Heart right ventricle (tissue), 16 donors: ENCODE measurements at regions of chr19 and their contacts with region 1.

Region 1: GRCh38 chr19:42529248-42529764 is 1.0 kb upstream of the CEACAM1 start:
- DNase-seq: peak; percentile 46 to 59
- ATAC-seq: peak; percentile 73 to 95 (median 84)
- H3K4me3 ChIP-seq: peak overlapping the region in 6 of 10 donors; percentile 27 to 50 (median 45)
- H3K27ac ChIP-seq: peak overlapping the region in 9 of 10 donors; percentile 33 to 89 (median 71)
- H3K4me1 ChIP-seq: peaks cover 2 to 35% (median 14%) of the 10 kb centered on the region in 9 donors
- H3K27me3 ChIP-seq: no peaks in the 10 kb centered on the region
- CTCF ChIP-seq: peak; percentile 74 to 92 (median 82)

Region 2: DNA sequence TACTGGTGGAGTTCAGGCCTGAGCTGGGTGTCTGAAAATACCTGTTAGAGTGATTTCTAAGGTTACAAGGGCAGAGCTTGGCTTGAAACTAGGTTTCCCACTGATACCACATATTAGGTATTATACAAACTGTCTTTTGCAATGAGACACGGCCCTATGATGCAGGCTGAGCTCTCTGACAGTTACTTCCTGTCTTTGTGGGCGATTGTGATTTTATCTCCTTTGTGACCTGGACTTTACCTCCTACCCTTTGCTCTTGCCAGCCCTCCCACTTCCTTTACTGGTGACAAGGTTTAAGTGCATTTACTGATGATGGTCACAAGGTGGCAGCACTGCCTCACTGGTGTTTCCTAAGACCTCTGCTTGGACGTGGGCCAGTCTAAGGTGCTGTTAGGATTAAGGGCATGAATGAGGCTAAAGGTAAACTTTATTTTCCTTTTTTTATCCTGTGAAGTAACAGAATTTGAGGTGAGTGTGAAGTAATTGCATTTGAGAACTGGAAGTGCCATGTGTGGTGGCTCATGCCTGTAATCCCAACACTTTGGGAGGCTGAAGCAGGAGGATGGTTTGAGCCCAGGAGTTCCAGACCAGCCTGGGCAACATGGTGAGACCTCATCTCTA is 78.9 kb before region 1 on chr19:
- intact Hi-C with region 1: loop called (anchors 1 to 10 kb)
- DNase-seq: peak; percentile 48 to 84
- ATAC-seq: peak; percentile 81 to 96 (median 91)
- H3K4me3 ChIP-seq: peak overlapping the region in 1 of 10 donors; percentile 7
- H3K27ac ChIP-seq: peak overlapping the region in 9 of 10 donors; percentile 50 to 74 (median 61)
- H3K4me1 ChIP-seq: peaks cover 0 to 33% (median 9%) of the 10 kb centered on the region in 9 donors
- H3K27me3 ChIP-seq: peaks cover 0 to 6% (median 0%) of the 10 kb centered on the region in 7 donors
- CTCF ChIP-seq: peak; percentile 81 to 94 (median 90)

Region 3: DNA sequence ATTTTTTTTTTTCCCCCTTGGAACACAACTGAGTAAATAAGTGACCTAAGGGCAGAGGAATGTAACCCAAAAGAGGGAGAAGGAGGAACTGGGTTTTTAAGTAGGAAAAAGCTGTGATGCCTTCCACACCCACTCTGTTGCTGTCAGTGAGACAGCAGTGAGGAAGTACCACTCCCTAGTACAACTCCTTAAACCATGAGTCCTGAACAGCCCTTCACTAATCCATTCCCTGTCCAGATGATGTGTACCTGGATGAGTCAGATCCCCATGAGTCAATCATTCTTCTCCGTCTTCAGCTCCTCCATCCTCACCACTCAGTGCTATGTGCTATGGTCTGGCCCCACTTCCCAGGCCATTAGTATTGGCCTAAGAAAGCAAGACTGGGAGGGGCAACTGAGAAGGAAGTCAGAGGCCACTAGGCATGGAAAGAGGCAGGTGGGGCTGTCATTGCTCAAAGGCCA is 73.7 kb before region 1 on chr19:
- intact Hi-C with region 1: loop called (anchors 1 to 10 kb)
- DNase-seq: no peak
- ATAC-seq: peak in 2 of 8 donors; percentile 11 to 71
- H3K4me3 ChIP-seq: no peak overlapping the region
- H3K27ac ChIP-seq: no peak overlapping the region
- H3K4me1 ChIP-seq: peaks cover 0 to 31% (median 3%) of the 10 kb centered on the region in 9 donors
- H3K27me3 ChIP-seq: peaks cover 0 to 6% (median 0%) of the 10 kb centered on the region in 7 donors
- CTCF ChIP-seq: no peak

Region 4: GRCh38 chr19:42512743-42513304 is 16.5 kb before region 1 on chr19:
- intact Hi-C with region 1: no loop called
- DNase-seq: no peak
- ATAC-seq: no peak
- H3K4me3 ChIP-seq: no peak overlapping the region
- H3K27ac ChIP-seq: no peak overlapping the region
- H3K4me1 ChIP-seq: no peaks in the 10 kb centered on the region
- H3K27me3 ChIP-seq: no peaks in the 10 kb centered on the region
- CTCF ChIP-seq: no peak